Activated CD8-positive, alpha-beta memory T cell treated with anti-CD3 and anti-CD28 coated beads, Interleukin-2, amount 10 ng/mL, durations not matched to agents 7 days and 5 days (primary cell): ENCODE measurements at regions of chr1 and their contacts with region 1.

Region 1: GRCh38 chr1:39609618-39610331 is 29.7 kb downstream of the HEYL start:
- DNase-seq: peak; percentile 73
- ATAC-seq: peak; percentile 83
- H3K4me3 Mint-ChIP-seq: no peak overlapping the region
- H3K27ac Mint-ChIP-seq: no peak overlapping the region
- H3K4me1 Mint-ChIP-seq: peaks cover 10% of the 10 kb centered on the region
- H3K27me3 Mint-ChIP-seq: peaks cover 24% of the 10 kb centered on the region

Region 2: DNA sequence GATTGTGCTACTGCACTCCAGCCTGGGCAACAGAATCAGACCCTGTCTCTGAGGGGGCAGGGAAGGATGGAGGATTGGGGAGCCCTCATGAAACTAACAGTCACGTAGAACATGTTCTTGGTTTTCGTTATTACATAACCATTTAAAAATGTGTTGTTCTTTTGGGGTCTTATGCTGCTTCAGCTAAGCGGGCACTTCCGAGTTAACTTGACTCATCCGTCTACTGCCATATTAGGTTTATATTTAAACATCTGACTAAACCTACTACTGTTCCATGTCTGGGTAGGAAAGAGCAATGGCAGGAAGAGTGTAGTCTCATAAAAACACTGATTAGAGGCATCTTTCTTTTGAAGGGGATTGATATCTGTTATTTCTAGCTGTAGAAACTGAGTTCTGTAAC is 177.8 kb before region 1 on chr1:
- CTCF ChIA-PET with region 1: no interaction called
- DNase-seq: no peak
- ATAC-seq: no peak
- H3K4me3 Mint-ChIP-seq: no peak overlapping the region
- H3K27ac Mint-ChIP-seq: no peak overlapping the region
- H3K4me1 Mint-ChIP-seq: no peaks in the 10 kb centered on the region
- H3K27me3 Mint-ChIP-seq: no peaks in the 10 kb centered on the region

Region 3: DNA sequence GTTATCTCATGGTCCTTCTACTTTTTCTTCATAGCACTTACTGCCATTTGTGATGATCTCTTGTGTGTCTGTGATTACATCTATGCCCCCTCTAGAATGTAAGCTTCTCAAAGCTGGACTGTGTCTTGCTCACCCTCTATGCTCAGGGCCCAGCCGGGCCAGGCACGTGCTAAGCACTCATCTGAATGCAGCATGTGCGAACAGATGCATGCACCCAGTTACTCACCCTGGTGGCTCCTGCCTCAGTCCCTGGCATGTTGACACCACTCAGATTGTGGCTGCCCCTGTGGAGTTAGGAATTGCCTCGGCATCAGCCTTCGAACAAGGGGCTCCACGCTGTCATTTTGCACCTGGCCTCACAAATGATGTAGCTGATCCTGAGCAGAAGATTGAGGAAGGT is 13.6 kb before region 1 on chr1:
- CTCF ChIA-PET with region 1: interaction called, 10 read pairs
- DNase-seq: no peak
- ATAC-seq: no peak
- H3K4me3 Mint-ChIP-seq: no peak overlapping the region
- H3K27ac Mint-ChIP-seq: no peak overlapping the region
- H3K4me1 Mint-ChIP-seq: peaks cover 8% of the 10 kb centered on the region
- H3K27me3 Mint-ChIP-seq: no peaks in the 10 kb centered on the region

Region 4: DNA sequence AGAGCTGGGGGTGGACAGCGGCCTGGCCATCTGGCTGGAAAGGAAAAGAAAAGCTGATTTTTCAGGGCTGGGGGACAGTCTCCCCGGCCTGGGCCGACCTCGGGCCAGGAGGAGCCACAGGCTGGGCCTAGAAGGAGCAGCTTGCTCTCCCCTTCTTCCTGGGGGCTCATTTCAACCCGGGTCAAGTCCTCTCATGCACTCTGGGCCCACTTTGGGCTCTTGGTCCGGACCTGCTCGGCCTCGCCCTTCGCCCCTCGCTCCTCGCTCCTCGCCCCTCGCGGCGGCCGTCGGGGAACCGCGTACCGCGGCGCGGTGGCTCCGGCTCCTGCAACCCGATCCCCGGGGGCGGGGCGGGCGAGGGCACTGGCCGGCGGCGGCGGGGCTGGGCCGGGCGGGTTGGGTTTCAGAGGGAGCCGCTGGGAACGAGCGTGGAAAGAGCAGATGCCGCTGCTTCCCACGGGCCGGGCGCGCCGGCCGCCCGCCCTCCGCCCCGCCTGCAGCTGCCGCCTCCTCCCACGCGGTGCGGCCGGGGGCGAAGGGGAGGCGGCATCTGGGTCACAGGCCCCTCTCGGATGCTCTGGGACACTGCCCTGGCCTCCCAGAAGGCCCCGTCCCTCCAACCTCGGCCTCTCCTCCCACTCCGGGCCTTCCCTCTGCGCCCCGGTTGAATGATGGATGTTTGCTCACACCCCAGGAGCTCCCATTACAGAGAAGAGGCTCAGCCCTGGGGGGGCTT is 23.1 kb after region 1 on chr1:
- CTCF ChIA-PET with region 1: interaction called, 23 read pairs
- DNase-seq: no peak
- ATAC-seq: no peak
- H3K4me3 Mint-ChIP-seq: no peak overlapping the region
- H3K27ac Mint-ChIP-seq: no peak overlapping the region
- H3K4me1 Mint-ChIP-seq: peaks cover 6% of the 10 kb centered on the region
- H3K27me3 Mint-ChIP-seq: peaks cover 47% of the 10 kb centered on the region

Region 5: DNA sequence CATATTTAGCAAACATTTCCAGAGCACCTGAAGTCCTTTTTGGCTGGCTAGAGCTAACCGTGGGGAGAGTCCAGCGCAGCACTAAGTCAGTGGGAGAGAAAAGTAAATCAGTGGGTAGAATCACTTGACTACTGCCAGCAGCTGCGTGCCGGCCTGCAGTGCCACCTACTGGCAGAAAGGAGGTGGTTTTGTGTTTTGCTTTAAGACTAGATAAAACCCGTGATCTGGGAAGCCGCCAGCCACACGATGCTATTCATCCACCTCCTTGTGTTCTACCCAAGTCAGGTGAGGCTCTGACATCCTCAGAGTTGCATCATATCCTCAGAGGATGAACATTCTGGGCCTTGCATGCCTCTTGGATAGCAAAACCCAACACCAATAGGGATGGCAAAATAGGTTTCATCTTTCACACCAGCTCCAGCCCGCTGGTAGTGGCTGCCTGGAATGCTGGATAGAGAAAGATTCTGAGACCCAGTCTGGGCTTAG is 43.8 kb after region 1 on chr1:
- CTCF ChIA-PET with region 1: interaction called, 264 read pairs
- DNase-seq: peak; percentile 85
- ATAC-seq: peak; percentile 80
- H3K4me3 Mint-ChIP-seq: no peak overlapping the region
- H3K27ac Mint-ChIP-seq: no peak overlapping the region
- H3K4me1 Mint-ChIP-seq: peaks cover 12% of the 10 kb centered on the region
- H3K27me3 Mint-ChIP-seq: peaks cover 5% of the 10 kb centered on the region

Region 6: GRCh38 chr1:39720094-39720999 is 110.6 kb after region 1 on chr1:
- CTCF ChIA-PET with region 1: interaction called, 24 read pairs
- DNase-seq: no peak
- ATAC-seq: peak; percentile 67
- H3K4me3 Mint-ChIP-seq: no peak overlapping the region
- H3K27ac Mint-ChIP-seq: no peak overlapping the region
- H3K4me1 Mint-ChIP-seq: no peaks in the 10 kb centered on the region
- H3K27me3 Mint-ChIP-seq: peaks cover 63% of the 10 kb centered on the region

Region 7: GRCh38 chr1:39799770-39800470 is 190.1 kb after region 1 on chr1:
- CTCF ChIA-PET with region 1: interaction called, 16 read pairs
- DNase-seq: peak; percentile 80
- ATAC-seq: peak; percentile 72
- H3K4me3 Mint-ChIP-seq: peak overlapping the region; percentile 64
- H3K27ac Mint-ChIP-seq: peak overlapping the region; percentile 87
- H3K4me1 Mint-ChIP-seq: peaks cover 15% of the 10 kb centered on the region
- H3K27me3 Mint-ChIP-seq: no peaks in the 10 kb centered on the region

Region 8: DNA sequence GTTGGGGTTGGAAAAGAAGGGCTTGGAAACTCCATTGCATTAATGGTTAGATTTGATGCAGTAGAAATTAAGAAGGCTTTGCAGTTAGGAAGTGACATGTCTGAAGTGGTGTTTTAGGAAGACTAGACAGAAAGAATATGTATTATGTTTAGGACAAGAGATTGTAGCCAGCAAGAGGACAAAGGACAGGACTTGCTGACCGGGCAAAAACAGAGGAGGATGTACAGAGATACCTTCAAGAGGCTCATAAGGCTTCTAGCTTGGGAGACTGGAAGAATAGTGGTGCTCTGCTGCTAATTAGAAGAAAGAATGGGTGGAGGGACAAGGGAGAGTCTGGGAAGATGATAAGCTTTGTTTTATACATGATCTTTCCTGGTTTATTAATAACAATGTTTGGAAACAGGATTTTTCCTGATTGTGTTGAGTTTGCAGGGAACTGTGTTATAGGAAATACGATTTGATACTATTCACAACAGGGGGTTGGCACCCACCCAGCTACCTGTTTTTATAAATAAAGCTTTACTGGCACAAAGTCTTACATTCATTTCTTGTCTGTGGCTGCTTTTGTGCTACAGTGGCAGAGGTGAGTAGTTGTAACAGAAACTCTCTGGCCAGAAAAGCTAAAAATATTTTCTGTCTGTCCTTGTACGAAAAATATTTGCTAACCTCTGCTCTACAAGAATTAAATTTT is 600.9 kb after region 1 on chr1:
- CTCF ChIA-PET with region 1: no interaction called
- DNase-seq: no peak
- ATAC-seq: no peak
- H3K4me3 Mint-ChIP-seq: no peak overlapping the region
- H3K27ac Mint-ChIP-seq: no peak overlapping the region
- H3K4me1 Mint-ChIP-seq: peaks cover 3% of the 10 kb centered on the region
- H3K27me3 Mint-ChIP-seq: no peaks in the 10 kb centered on the region